ENCODE measurements at regions of chr2 and their contacts with region 1.

Region 1: DNA sequence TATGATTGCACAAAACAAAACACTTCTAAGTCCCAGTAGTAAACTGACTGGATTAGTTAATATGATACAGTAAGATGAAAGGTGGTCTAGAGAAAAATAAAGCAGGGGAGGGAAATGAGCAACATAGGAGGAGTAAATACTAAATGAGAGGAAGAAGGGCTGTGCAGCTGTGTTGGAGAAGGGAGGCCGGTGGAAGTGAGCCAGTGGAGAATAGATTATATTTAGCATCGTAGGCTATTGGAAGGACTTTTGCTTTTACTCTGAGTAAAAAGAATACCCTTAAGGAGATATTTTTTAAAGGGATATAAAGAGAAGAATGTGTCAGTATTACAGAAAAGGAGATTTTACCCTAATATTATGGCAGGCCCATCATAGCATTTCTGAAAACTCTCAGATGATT is 12.7 kb downstream of the WDR75 start:
- DNase-seq: peak in 1 of 2 donors; percentile 23
- ATAC-seq: peak in 3 of 8 donors; percentile 51 to 59 (median 58)
- H3K4me3 ChIP-seq: no peak overlapping the region
- H3K27ac ChIP-seq: peak overlapping the region in 1 of 10 donors; percentile 15
- H3K4me1 ChIP-seq: peaks cover 0 to 21% (median 5%) of the 10 kb centered on the region in 9 donors
- H3K27me3 ChIP-seq: no peaks in the 10 kb centered on the region
- CTCF ChIP-seq: no peak

Region 2: DNA sequence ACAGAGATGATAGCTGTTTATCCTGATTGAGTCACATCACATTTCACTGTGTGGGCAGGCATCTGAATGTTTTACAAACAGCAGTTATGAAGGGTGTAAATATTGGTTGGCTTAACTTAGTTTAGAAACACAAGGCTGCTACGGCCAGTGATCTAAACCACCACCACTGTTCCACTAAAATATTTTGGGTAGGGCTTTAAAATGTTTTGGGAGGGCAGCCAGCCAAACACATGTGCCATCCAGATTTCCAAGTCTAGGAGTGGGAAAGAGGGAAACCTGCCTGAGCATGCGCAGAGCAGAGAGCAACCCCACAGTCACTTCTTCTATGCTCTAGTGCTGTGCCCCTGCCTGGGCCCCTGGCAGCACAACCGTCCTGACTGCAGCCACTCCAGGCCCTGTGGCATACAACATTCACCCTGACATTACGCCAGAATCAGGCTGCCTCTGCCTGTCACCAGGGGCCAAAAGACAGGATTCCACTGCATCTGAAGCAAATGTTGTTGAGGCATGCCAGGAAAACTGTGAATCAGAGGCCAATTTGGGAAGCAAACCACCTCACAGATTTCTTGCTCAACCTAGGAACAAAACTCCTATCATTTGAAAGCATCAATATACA is 199.6 kb before region 1 on chr2:
- intact Hi-C with region 1: no loop called
- DNase-seq: peak; percentile 12 to 14
- ATAC-seq: peak in 6 of 8 donors; percentile 25 to 82 (median 53)
- H3K4me3 ChIP-seq: no peak overlapping the region
- H3K27ac ChIP-seq: peak overlapping the region in 2 of 10 donors; percentile 11 to 44
- H3K4me1 ChIP-seq: peaks cover 0 to 19% (median 6%) of the 10 kb centered on the region in 9 donors
- H3K27me3 ChIP-seq: no peaks in the 10 kb centered on the region
- CTCF ChIP-seq: no peak

Region 3: GRCh38 chr2:189302274-189302948 is 151.6 kb before region 1 on chr2:
- intact Hi-C with region 1: no loop called
- DNase-seq: no peak
- ATAC-seq: no peak
- H3K4me3 ChIP-seq: no peak overlapping the region
- H3K27ac ChIP-seq: no peak overlapping the region
- H3K4me1 ChIP-seq: peaks cover 0 to 5% (median 0%) of the 10 kb centered on the region in 9 donors
- H3K27me3 ChIP-seq: no peaks in the 10 kb centered on the region
- CTCF ChIP-seq: no peak

Region 4: DNA sequence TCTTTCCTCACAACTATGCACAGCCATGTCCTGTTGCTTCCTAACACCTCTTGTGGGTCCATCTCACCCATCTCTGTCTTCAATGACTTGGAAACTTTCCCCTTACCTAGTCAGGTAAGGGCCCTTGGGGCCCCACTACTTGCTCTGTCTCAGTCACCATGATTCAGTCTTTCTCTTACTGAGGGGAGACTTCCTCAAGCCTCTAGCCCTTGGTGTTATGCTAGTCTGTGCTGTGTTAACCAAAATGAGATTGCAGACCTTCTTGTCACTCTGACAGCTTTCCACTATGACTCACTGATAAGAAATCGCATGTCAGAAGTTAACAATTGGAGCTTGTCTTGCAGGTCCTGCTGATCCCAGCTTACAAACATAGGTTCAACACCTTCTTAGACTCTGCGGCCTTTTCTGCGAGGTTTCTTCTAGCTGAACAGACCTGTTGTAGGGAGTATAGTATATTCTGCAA is 52.5 kb after region 1 on chr2:
- intact Hi-C with region 1: no loop called
- DNase-seq: no peak
- ATAC-seq: peak in 2 of 8 donors; percentile 41 to 52
- H3K4me3 ChIP-seq: no peak overlapping the region
- H3K27ac ChIP-seq: no peak overlapping the region
- H3K4me1 ChIP-seq: peaks cover 0 to 12% (median 0%) of the 10 kb centered on the region in 9 donors
- H3K27me3 ChIP-seq: no peaks in the 10 kb centered on the region
- CTCF ChIP-seq: no peak

Region 5: GRCh38 chr2:189559579-189560272 is 105.7 kb after region 1 on chr2:
- intact Hi-C with region 1: loop called in 1 of 10 experiments (anchors 5 kb)
- DNase-seq: peak; percentile 23 to 59
- ATAC-seq: peak; percentile 60 to 86 (median 73)
- H3K4me3 ChIP-seq: no peak overlapping the region
- H3K27ac ChIP-seq: peak overlapping the region in 7 of 10 donors; percentile 6 to 59 (median 27)
- H3K4me1 ChIP-seq: peaks cover 4 to 69% (median 54%) of the 10 kb centered on the region in 9 donors
- H3K27me3 ChIP-seq: no peaks in the 10 kb centered on the region
- CTCF ChIP-seq: no peak

Region 6: GRCh38 chr2:189633392-189633811 is 179.4 kb after region 1 on chr2:
- intact Hi-C with region 1: loop called in 1 of 10 experiments (anchors 10 kb)
- DNase-seq: peak in 1 of 2 donors; percentile 19
- ATAC-seq: peak in 2 of 8 donors; percentile 13 to 54
- H3K4me3 ChIP-seq: no peak overlapping the region
- H3K27ac ChIP-seq: no peak overlapping the region
- H3K4me1 ChIP-seq: peaks cover 0 to 8% (median 0%) of the 10 kb centered on the region in 9 donors
- H3K27me3 ChIP-seq: no peaks in the 10 kb centered on the region
- CTCF ChIP-seq: peak; percentile 10 to 65 (median 54)

Region 7: GRCh38 chr2:189913821-189914220 is 459.8 kb after region 1 on chr2:
- intact Hi-C with region 1: no loop called
- DNase-seq: no peak
- ATAC-seq: no peak
- H3K4me3 ChIP-seq: no peak overlapping the region
- H3K27ac ChIP-seq: no peak overlapping the region
- H3K4me1 ChIP-seq: no peaks in the 10 kb centered on the region
- H3K27me3 ChIP-seq: no peaks in the 10 kb centered on the region
- CTCF ChIP-seq: no peak